ENCODE measurements at regions of chr4 and their contacts with region 1.

Region 1: GRCh38 chr4:156968479-156968984 is 3.1 kb downstream of the PDGFC start:
- DNase-seq: peak; percentile 82
- H3K4me3 Mint-ChIP-seq: peak overlapping the region; percentile 96
- H3K27ac Mint-ChIP-seq: peak overlapping the region; percentile 25
- H3K4me1 Mint-ChIP-seq: peaks cover 41% of the 10 kb centered on the region
- H3K27me3 Mint-ChIP-seq: no peaks in the 10 kb centered on the region
- CTCF ChIP-seq: peak; percentile 77

Region 2: DNA sequence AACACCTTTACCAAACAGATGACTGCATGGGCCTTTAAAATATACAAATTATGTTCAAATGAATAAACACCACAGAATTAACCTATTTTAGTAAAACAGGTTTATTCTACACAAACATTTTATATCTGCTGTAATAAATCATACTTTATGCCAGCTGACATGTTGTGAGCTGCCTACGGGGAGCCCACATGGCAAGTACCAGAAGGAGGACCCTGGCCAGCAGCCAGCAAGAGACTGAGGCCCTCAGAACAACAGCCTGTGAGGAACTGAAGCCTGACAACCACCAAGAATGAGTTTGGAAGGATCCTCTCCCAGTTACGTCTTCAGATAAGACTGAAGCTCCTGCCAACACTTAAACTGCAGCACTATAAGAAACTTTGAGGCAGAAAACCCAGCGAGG is 373.9 kb before region 1 on chr4:
- CTCF ChIA-PET with region 1: interaction called, 6 read pairs
- POLR2A ChIA-PET with region 1: no interaction called
- intact Hi-C with region 1: loop called (anchors 1 kb)
- DNase-seq: peak; percentile 42
- H3K4me3 Mint-ChIP-seq: no peak overlapping the region
- H3K27ac Mint-ChIP-seq: peak overlapping the region; percentile 67
- H3K4me1 Mint-ChIP-seq: peaks cover 11% of the 10 kb centered on the region
- H3K27me3 Mint-ChIP-seq: no peaks in the 10 kb centered on the region
- CTCF ChIP-seq: no peak

Region 3: GRCh38 chr4:156771171-156771837 is 197.2 kb before region 1 on chr4:
- CTCF ChIA-PET with region 1: interaction called, 8 read pairs
- POLR2A ChIA-PET with region 1: interaction called, 89 read pairs
- intact Hi-C with region 1: loop called (anchors 1 kb)
- DNase-seq: peak; percentile 98
- H3K4me3 Mint-ChIP-seq: peak overlapping the region; percentile 63
- H3K27ac Mint-ChIP-seq: peak overlapping the region; percentile 52
- H3K4me1 Mint-ChIP-seq: peaks cover 39% of the 10 kb centered on the region
- H3K27me3 Mint-ChIP-seq: no peaks in the 10 kb centered on the region
- CTCF ChIP-seq: no peak

Region 4: DNA sequence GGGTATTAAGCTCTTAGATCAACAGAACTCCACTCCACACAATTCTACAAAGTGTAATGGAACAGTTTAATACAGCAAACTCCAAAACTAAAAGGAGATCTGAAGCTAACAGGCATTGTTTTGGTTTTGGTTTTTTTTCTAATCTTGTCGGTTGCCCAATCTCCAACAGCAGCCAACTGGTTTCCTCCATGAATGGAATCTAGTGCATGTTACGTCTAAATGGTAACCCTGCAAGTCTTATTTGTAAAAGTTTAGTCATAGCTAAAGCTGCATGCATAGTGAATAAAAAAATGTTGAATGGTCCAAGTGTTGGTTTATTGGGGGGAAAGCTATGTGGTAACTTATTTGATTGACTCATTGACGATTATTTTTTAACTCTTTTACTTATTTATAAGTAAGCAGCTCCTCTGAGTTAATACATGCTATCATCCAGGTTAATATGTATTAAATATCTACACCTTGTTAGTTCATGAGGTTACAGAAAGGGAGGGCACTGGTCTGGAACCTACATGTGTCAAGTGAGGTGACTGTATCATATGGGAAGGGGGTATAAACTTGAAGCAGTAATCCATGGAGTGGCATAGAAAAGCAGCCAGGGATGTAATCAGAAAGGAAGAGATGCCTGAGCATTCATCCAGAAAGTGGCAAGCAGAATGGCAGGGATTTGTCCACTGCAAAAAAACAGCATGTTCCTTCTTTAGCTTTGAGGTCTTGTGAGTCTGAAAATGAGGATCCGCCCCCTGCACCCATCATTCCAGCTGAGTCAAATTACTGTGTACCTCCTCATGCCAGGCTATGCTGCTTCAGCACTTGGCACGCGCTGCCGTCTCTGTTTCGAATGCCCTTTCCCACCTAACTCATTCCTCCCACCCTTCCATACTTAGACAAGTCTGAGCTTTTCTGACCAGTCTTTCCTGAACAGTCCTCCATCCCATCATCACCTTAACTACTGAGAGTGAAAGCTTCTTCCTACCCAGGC is 78.6 kb before region 1 on chr4:
- CTCF ChIA-PET with region 1: interaction called, 5 read pairs
- POLR2A ChIA-PET with region 1: interaction called, 4 read pairs
- intact Hi-C with region 1: loop called (anchors 2 kb)
- DNase-seq: peak; percentile 71
- H3K4me3 Mint-ChIP-seq: peak overlapping the region; percentile 2
- H3K27ac Mint-ChIP-seq: peak overlapping the region; percentile 72
- H3K4me1 Mint-ChIP-seq: peaks cover 32% of the 10 kb centered on the region
- H3K27me3 Mint-ChIP-seq: no peaks in the 10 kb centered on the region
- CTCF ChIP-seq: no peak

Region 5: DNA sequence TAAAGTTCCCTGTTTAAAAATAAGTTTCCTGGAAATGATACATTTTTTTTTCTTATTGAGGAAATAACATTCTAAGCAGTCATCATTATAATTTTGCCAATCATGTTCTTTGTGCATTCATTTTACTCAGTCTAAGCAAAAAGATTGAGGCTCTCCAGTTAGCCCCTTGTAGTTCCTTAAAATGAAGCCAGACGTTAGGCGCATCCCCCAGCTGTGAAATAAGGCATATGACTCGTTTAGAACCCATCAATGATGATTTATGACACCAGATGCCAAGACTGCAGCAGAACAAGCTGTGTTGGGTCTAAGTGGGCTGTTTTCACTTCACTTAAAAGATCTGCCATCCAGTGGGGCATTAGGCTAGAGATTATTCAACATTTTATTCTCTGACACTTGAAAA is 13.9 kb before region 1 on chr4:
- CTCF ChIA-PET with region 1: interaction called, 11 read pairs
- POLR2A ChIA-PET with region 1: interaction called, 27 read pairs
- intact Hi-C with region 1: loop called (anchors 1 kb)
- DNase-seq: no peak
- H3K4me3 Mint-ChIP-seq: no peak overlapping the region
- H3K27ac Mint-ChIP-seq: no peak overlapping the region
- H3K4me1 Mint-ChIP-seq: peaks cover 62% of the 10 kb centered on the region
- H3K27me3 Mint-ChIP-seq: no peaks in the 10 kb centered on the region
- CTCF ChIP-seq: no peak

Region 6: GRCh38 chr4:157128395-157128794 is 159.9 kb after region 1 on chr4:
- CTCF ChIA-PET with region 1: interaction called, 12 read pairs
- POLR2A ChIA-PET with region 1: no interaction called
- intact Hi-C with region 1: loop called (anchors 1 kb)
- DNase-seq: peak; percentile 38
- H3K4me3 Mint-ChIP-seq: no peak overlapping the region
- H3K27ac Mint-ChIP-seq: no peak overlapping the region
- H3K4me1 Mint-ChIP-seq: no peaks in the 10 kb centered on the region
- H3K27me3 Mint-ChIP-seq: no peaks in the 10 kb centered on the region
- CTCF ChIP-seq: peak; percentile 64

Region 7: DNA sequence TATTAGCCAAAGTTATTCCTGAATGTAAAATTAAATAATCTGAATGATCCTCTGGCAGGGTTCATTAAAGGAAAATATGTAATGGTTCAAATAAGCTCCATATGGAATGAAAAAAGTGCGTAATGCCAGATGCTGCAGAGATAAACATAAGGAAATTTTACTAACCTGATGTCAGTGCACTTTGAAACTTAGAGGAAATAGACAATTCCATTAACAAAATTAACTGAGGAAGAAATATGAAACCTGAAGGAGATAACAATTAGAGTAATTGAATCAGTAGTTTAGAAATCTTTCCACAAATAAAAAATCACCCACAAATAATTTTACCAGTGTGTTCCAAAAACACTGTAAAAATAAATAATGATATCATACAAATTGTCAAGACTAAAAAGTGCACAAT is 639.5 kb after region 1 on chr4:
- CTCF ChIA-PET with region 1: no interaction called
- POLR2A ChIA-PET with region 1: no interaction called
- intact Hi-C with region 1: no loop called
- DNase-seq: no peak
- H3K4me3 Mint-ChIP-seq: no peak overlapping the region
- H3K27ac Mint-ChIP-seq: no peak overlapping the region
- H3K4me1 Mint-ChIP-seq: no peaks in the 10 kb centered on the region
- H3K27me3 Mint-ChIP-seq: no peaks in the 10 kb centered on the region
- CTCF ChIP-seq: no peak

Measured in MCF 10A (cell line).